Right lobe of liver (tissue), 6 donors: ENCODE measurements at regions of chr1 and their contacts with region 1.

Region 1: DNA sequence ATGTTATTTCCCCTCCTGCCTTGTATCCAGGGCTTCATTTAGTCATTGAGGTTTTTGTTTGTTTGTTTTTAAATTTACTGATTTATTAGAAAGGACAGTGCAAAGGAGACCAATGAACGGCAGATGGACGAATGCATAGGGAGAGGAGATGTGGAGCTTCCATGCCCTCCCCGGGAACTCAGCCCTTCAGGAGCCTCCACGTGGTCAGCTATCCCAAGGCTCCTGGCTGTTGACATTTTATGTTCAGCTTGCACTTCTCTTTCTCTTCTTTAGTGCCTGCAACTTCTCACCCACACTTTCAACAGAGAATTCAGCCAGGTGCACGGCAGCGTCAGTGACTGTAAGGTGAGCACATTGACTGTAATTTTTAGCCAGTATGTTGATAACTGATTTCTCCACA is 30.7 kb upstream of the PGD start:
- DNase-seq: no peak
- ATAC-seq: no peak
- H3K4me3 ChIP-seq: no peak overlapping the region
- H3K27ac ChIP-seq: no peak overlapping the region
- H3K4me1 ChIP-seq: no peaks in the 10 kb centered on the region
- H3K27me3 ChIP-seq: no peaks in the 10 kb centered on the region
- CTCF ChIP-seq: no peak
- POLR2A ChIP-seq: no peak

Region 2: DNA sequence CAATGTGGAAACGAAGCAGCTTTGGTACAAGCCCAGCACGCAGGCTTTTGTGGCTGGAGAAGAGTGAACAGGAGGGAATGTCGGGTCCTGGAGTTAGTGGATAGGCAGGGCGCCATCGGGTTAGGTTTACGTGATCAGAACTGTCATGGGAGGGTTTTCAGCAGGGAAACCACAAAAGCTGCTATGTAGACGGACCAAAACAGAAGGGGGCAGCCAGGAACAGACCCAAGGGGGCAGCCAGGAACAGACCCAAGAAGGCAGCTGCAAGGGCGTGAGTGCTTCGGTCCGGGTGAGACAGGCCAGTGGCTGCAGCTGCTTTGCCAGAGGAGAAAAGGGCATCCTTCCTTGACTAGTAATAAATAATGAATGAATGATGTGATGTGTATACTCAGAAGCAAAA is 235.3 kb before region 1 on chr1:
- intact Hi-C with region 1: loop called in 1 of 2 experiments (anchors 5 kb)
- DNase-seq: no peak
- ATAC-seq: no peak
- H3K4me3 ChIP-seq: no peak overlapping the region
- H3K27ac ChIP-seq: no peak overlapping the region
- H3K4me1 ChIP-seq: no peaks in the 10 kb centered on the region
- H3K27me3 ChIP-seq: no peaks in the 10 kb centered on the region
- CTCF ChIP-seq: no peak
- POLR2A ChIP-seq: no peak